ENCODE measurements at regions of chr4 and their contacts with region 1.

Region 1: DNA sequence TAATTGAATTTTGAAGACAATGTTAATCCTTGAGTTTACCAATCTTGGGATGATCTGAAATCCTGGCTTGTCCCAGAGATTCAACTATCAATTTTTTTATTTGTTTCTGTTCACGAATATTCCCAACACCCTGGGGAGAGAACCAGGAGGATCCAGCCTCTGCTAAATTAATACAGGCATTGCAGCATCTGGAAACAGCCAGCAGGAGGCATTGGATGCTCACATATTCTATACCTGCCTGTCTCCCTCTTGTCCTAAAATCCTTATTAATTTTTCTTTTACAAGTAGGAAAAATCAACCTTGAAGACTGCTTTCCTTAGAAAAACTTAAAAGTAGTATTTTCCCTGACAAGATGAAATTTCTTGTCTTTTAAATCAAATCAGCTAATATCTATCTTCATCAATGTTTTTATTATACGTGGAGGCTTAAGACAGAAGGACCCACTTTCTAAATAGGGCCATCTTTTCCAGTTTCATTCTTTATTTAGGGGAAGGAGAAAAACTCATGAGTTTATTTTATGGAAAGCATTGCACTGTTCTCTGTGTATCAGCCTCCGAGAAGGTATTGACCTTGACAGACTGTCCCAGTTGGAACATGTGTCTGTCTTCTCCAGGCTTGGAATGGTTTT is 102.4 kb downstream of the CLNK start:
- DNase-seq: peak; percentile 56
- H3K4me3 ChIP-seq: no peak overlapping the region
- H3K27ac ChIP-seq: no peak overlapping the region
- H3K4me1 ChIP-seq: no peaks in the 10 kb centered on the region
- H3K27me3 ChIP-seq: peaks cover 0 to 3% of the 10 kb centered on the region in 2 experiments
- CTCF ChIP-seq: peak; percentile 72 to 75
- POLR2A ChIP-seq: no peak

Region 2: DNA sequence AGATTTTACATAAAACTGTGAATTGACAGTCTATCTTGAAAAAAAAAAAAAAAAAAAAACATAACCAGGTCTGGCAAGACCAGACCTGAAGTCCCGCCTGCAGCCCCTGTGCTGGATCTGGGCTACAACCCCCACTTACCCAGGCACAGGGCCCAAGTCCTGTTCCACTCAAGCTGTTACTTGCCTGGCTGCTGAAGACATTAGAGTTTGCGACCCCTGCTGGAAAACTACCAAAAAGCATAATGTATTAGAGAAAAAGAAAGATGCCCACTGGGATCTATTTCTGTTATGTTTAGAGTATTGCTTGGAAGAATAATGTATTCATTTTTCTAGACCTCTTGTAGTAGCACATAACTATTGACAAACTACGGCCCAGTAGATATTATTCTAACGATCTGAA is 841.8 kb after region 1 on chr4:
- CTCF ChIA-PET with region 1: interaction called, 35 read pairs
- POLR2A ChIA-PET with region 1: no interaction called
- dilution Hi-C with region 1: no loop called
- intact Hi-C with region 1: loop called (anchors 1 kb)
- DNase-seq: peak; percentile 38
- H3K4me3 ChIP-seq: no peak overlapping the region
- H3K27ac ChIP-seq: no peak overlapping the region
- H3K4me1 ChIP-seq: peaks cover 16% of the 10 kb centered on the region
- H3K27me3 ChIP-seq: peaks cover 10 to 13% of the 10 kb centered on the region in 2 experiments
- CTCF ChIP-seq: peak; percentile 33 to 41
- POLR2A ChIP-seq: no peak

Region 3: GRCh38 chr4:11623726-11624037 is 1041.5 kb after region 1 on chr4:
- CTCF ChIA-PET with region 1: no interaction called
- POLR2A ChIA-PET with region 1: no interaction called
- dilution Hi-C with region 1: no loop called
- intact Hi-C with region 1: loop called (anchors 5 kb)
- DNase-seq: peak; percentile 45
- H3K4me3 ChIP-seq: no peak overlapping the region
- H3K27ac ChIP-seq: no peak overlapping the region
- H3K4me1 ChIP-seq: peaks cover 10% of the 10 kb centered on the region
- H3K27me3 ChIP-seq: no peaks in the 10 kb centered on the region
- CTCF ChIP-seq: peak; percentile 11 to 48
- POLR2A ChIP-seq: no peak

Region 4: DNA sequence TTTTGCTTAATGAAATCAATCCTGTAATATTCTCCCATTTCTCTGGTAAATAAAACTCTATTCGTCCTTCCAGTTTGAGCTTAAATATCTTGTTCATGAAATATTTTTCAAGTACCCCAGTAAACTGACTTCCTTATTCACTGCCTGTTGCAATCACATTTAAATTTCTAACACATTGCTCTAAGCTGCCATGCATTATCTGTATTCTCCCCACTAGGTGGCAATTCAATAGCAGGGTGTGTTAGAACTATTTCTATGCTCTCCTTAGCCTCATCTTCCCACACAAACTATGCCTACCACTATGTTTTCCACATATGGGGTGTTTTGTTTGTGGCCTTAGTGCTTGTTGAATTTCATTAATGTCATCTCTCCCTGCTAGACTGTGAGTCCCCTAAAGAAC is 1223.7 kb after region 1 on chr4:
- CTCF ChIA-PET with region 1: no interaction called
- POLR2A ChIA-PET with region 1: no interaction called
- dilution Hi-C with region 1: no loop called
- intact Hi-C with region 1: loop called (anchors 10 kb)
- DNase-seq: peak; percentile 81
- H3K4me3 ChIP-seq: no peak overlapping the region
- H3K27ac ChIP-seq: peak overlapping the region; percentile 45
- H3K4me1 ChIP-seq: peaks cover 21% of the 10 kb centered on the region
- H3K27me3 ChIP-seq: no peaks in the 10 kb centered on the region
- CTCF ChIP-seq: peak; percentile 58 to 65
- POLR2A ChIP-seq: no peak